Activated CD4-positive, alpha-beta T cell treated with anti-CD3 and anti-CD28 coated beads for 36 hours (primary cell): ENCODE measurements at regions of chr17 and their contacts with region 1.

Region 1: DNA sequence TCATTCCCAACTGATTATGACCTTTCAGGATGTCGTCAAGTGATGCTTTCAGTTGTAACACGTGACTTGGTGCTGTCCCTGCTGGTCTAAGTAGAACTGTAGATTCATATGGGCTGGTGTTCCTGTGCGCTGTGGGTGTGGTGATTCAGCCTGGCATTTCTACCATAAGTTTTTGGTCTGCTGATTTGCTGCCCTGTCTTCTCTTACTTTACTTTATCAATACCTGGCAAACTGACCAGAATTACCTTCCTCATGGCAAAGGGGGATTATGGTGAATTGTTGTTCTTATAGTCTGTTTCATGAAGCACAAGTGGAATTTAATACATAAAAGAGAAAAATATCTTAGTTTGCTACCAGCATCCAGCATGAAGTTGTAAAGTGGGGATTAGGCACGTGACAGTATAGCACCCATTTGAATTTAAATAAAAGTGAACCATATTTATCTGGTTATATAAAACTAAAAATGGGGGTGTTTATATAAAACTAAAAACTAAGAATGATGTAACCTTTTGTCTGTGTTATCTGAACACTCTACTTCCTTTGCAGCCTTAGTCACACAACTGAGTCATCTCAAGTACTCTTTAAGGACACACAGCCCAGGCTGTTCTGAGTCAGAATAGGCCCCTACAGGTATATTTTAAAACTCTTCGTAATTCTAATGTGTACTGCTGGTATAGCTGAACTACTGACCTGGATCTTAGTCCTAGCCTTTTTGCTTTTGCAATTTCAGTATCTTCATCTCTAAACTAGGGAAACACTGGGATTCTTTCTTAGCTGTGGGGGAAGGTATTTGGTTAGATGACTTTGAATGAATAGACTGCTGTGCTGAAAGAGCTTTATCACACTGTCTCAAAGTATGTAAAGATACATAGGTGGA is 28.3 kb downstream of the TTC19 start:
- DNase-seq: peak; percentile 80
- ATAC-seq: peak; percentile 98
- H3K4me3 Mint-ChIP-seq: peak overlapping the region; percentile 61
- H3K27ac Mint-ChIP-seq: peak overlapping the region; percentile 97
- H3K4me1 Mint-ChIP-seq: peaks cover 48% of the 10 kb centered on the region
- H3K27me3 Mint-ChIP-seq: no peaks in the 10 kb centered on the region

Region 2: DNA sequence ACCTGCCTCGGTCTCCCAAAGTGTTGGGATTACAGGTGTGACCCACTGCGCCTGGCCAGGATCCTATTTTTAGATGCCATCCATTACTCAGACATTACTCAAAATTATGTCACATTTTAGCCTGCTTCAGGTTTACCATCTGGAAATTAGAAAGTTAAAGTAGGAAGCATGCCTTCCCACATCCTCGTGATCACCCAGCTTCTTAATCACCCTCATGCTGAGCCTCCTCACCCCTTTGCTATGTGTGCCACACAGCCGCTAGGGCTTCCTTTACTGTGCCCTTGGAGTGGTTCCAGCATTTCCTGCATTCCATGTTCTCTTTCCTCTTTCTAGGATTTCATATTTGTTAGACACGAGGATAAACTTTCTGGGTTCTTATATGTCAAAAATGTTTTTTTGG is 73.7 kb before region 1 on chr17:
- CTCF ChIA-PET with region 1: no interaction called
- POLR2A ChIA-PET with region 1: no interaction called
- intact Hi-C with region 1: loop called (anchors 1 kb)
- DNase-seq: no peak
- ATAC-seq: no peak
- H3K4me3 Mint-ChIP-seq: no peak overlapping the region
- H3K27ac Mint-ChIP-seq: no peak overlapping the region
- H3K4me1 Mint-ChIP-seq: peaks cover 23% of the 10 kb centered on the region
- H3K27me3 Mint-ChIP-seq: peaks cover 25% of the 10 kb centered on the region

Region 3: DNA sequence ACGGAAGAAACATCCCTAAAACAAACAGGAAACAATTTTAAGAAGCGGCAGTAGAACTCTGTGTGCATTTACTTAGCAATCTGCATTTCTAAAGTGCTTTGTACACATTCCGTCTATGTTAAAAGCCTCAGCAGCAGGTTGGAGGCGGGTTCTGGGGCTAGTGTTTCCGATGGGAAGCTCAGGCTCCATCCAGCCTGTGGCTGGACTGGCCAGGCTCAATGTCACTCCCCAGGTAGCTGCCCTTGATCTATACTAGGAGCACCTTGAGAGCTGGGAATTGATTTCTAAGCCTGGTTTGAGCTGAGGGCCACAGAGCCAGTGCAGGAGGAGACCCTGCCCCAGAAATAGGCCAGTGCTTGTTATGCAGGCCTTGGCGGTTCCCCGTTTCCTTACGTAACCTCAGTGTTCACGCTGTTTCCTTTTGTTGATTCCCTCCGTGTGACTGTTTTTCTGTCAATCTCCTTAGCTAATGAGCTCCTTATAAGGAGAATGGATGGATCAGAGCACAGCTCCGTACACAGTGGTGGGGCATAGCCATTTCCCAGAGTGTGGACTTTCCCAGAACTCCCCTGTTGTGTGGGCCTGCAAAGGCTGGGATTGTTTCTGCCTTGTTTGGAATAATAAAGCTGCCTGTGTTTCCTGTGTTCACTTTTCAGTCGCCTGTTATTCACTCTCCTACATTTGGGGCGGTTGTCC is 61.6 kb before region 1 on chr17:
- CTCF ChIA-PET with region 1: no interaction called
- POLR2A ChIA-PET with region 1: no interaction called
- intact Hi-C with region 1: no loop called
- DNase-seq: no peak
- ATAC-seq: no peak
- H3K4me3 Mint-ChIP-seq: no peak overlapping the region
- H3K27ac Mint-ChIP-seq: no peak overlapping the region
- H3K4me1 Mint-ChIP-seq: peaks cover 12% of the 10 kb centered on the region
- H3K27me3 Mint-ChIP-seq: peaks cover 18% of the 10 kb centered on the region

Region 4: DNA sequence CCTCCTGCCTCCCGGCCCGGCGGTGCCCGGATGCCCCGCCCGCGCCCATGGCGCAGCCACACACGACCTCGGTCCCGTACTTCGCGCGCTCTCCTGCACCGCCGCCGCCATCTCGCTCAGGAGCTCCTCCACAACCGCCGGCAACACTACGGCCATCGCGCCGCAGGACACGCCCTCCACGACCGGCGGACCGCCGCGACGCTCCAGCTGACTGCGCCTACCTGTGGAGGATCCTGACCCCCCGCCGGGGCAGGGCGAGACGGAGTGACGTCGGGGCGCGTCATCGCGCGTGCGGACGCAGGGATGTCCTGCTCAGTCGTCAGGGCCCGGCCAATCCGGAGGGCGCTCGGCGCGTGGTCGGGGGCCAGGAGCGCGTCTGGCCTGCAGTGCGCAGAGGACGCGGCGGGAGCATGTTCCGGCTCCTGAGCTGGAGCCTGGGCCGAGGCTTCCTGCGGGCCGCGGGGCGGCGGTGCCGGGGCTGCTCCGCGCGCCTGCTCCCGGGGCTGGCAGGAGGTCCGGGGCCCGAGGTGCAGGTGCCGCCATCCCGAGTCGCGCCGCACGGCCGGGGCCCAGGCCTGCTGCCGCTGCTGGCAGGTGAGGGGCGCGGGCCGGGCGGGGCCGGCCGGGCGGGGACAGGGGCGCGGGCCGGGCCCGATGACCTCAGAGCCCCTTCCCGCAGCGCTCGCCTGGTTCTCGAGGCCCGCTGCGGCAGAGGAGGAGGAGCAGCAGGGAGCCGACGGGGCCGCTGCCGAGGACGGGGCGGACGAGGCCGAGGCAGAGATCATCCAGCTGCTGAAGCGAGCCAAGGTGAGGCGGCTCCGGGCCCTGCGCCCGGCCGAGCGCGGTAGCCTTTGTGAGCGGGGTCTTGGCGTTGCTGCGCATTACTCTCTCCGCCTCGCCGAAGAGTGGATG is 28.3 kb before region 1 on chr17 and contains the starts of genes TTC19 and ZSWIM7:
- CTCF ChIA-PET with region 1: interaction called, 6 read pairs
- POLR2A ChIA-PET with region 1: interaction called, 5 read pairs
- intact Hi-C with region 1: loop called (anchors 1 to 2 kb)
- DNase-seq: peak; percentile 97
- ATAC-seq: peak; percentile 88
- H3K4me3 Mint-ChIP-seq: peak within 1 kb of the TSS; percentile 90
- H3K27ac Mint-ChIP-seq: peak within 1 kb of the TSS; percentile 97
- H3K4me1 Mint-ChIP-seq: peaks cover 22% of the 10 kb centered on the region
- H3K27me3 Mint-ChIP-seq: no peaks in the 10 kb centered on the region
- total RNA-seq, gene TTC19: 21.1 to 22.0 TPM
- total RNA-seq, gene ZSWIM7: 11.2 to 11.7 TPM

Region 5: GRCh38 chr17:16215273-16215964 is 187.5 kb after region 1 on chr17 and contains the start of gene NCOR1:
- CTCF ChIA-PET with region 1: no interaction called
- POLR2A ChIA-PET with region 1: no interaction called
- intact Hi-C with region 1: loop called in 1 of 2 experiments (anchors 1 kb)
- DNase-seq: peak; percentile 96
- ATAC-seq: peak; percentile 87
- H3K4me3 Mint-ChIP-seq: peak within 1 kb of the TSS; percentile 93
- H3K27ac Mint-ChIP-seq: peak within 1 kb of the TSS; percentile 81
- H3K4me1 Mint-ChIP-seq: peaks cover 42% of the 10 kb centered on the region
- H3K27me3 Mint-ChIP-seq: no peaks in the 10 kb centered on the region
- total RNA-seq, gene NCOR1: 110 to 155 TPM

Region 6: DNA sequence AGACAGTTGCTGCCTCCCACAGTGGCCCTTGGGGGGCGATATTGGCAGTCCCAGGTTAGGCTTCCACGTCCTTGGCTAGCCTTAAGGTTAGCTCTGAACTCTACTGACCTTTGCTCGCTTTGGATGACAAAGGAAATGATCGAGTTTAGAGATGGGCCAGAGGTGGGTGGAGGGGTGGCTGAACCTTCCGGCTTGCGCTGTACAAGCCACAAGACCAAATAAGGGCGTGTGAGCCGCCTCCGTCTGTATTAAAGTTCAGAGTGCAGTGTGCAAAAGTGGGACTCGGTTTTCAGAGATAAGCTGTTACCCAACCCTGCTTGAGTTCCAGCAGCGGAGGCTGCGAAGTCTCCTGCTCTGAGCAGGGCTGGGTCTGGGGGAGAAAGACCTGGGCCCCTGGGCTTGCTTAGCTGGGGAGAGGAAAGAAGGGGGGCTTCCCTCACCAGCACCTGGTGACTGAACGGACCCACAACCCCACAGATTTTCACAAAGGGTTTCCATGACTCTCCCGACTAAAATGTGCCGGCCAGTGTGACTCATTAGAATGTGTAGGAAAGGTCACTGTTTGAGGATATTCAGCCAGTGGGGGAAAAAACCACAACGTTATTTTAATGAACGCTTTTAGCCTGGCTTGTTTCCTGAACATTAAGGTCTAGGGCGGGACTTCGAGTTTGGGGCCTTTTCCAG is 258.2 kb after region 1 on chr17:
- CTCF ChIA-PET with region 1: no interaction called
- POLR2A ChIA-PET with region 1: no interaction called
- intact Hi-C with region 1: loop called in 1 of 2 experiments (anchors 5 kb)
- DNase-seq: peak; percentile 90
- ATAC-seq: peak; percentile 94
- H3K4me3 Mint-ChIP-seq: peak overlapping the region; percentile 66
- H3K27ac Mint-ChIP-seq: peak overlapping the region; percentile 96
- H3K4me1 Mint-ChIP-seq: peaks cover 53% of the 10 kb centered on the region
- H3K27me3 Mint-ChIP-seq: no peaks in the 10 kb centered on the region